Lower leg skin (tissue), 4 donors: ENCODE measurements at regions of chr9 and their contacts with region 1.

Region 1: DNA sequence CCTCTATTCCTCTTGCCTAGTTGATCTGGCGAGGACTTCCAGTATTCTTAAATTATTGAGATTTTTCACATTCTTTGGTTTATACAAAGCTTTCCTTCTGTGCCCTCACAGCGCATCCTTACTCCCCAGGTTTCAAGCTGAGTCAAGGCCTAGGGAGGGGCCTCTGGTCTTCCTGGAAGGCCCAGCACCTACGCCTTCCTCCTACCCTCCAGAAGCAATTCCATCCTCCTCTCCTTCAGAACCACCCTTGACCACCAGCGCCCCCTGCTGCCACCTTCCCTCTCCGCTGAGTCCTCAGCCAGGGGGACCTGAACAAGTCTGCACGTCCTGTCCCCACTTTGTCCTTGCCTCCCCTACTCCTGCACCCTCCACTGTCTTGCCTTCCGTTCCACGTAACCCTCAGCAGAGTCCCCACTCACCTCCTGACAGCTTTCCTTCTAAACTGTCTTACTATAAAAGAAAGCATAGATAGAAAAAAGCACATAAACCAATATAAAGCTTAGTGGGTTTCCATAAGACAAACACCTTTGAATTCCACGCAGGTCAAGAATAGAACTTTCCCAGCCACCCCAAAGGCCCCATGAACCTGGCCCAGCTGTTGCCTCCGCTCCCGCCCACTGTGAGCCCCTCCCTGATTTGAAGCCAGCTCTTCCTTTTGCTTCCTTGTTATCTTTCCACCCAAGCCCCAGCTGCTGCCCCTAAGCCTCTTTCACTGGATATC is 63.0 kb upstream of the CTSL start:
- DNase-seq: peak; percentile 66 to 96
- H3K4me3 ChIP-seq: no peak overlapping the region
- CTCF ChIP-seq: peak in 1 of 3 donors; percentile 81
- POLR2A ChIP-seq: no peak

Region 2: DNA sequence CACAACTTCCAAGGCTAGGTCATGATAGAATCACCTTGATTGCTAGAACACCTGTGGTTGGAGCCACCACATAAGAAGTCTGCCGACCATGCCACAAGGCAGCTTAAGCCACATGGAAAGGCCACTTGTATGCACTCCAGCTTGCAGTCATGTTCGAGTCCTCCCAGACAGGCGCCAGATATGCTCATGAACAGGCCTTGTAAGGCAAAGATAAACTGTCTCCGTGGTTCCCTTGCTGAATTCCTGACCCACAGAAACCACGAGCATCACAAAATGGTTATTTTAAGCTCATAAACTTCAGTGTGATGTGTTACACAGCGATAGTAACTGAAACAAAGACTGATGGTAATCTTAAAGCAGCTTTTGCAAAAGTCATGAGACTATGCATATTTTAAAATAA is 353.7 kb before region 1 on chr9:
- intact Hi-C with region 1: no loop called
- DNase-seq: no peak
- H3K4me3 ChIP-seq: no peak overlapping the region
- CTCF ChIP-seq: no peak
- POLR2A ChIP-seq: no peak

Region 3: GRCh38 chr9:87336914-87337333 is 326.0 kb before region 1 on chr9:
- intact Hi-C with region 1: loop called (anchors 5 kb)
- DNase-seq: no peak
- H3K4me3 ChIP-seq: no peak overlapping the region
- CTCF ChIP-seq: peak in 1 of 3 donors; percentile 53
- POLR2A ChIP-seq: no peak